Endothelial cell of umbilical vein (primary cell): ENCODE measurements at regions of chr20 and their contacts with region 1.

Region 1: DNA sequence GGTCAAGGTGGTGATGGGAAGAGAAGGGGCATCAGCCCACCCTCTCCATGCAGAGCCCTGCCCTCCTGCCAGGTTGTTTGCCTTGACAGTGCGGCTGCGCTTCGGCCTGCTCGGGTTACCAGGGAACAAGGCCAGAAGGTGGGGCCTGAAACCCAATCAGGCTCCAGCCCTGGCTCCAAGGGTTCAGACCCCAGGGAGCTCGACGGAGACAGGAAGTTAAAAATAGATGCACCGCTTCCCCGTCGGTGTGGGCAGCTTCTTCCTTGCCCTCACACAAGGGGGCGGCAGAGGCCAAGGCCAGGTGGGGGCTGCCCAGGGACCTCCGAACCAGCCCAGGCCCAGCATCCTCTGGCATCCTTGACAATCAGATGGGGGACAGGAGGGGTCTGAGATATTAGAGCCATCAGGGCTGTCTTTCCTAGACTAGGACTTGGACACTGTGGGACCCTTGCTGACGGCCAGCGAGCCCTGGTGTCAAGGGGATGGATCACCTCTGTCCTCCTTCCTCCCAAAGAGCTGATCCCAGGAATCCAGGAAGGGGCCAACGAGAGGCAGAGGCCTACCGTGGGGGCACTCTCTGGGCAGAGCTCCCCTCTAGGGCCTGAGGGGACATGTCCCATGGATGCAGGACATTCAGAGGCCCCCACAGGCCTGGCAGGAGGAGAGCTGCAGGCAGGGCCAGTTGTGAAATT is 65.2 kb downstream of the RIPOR3 start:
- DNase-seq: no peak
- H3K4me3 ChIP-seq: no peak overlapping the region
- H3K27ac ChIP-seq: no peak overlapping the region
- H3K4me1 ChIP-seq: no peaks in the 10 kb centered on the region
- H3K27me3 ChIP-seq: no peaks in the 10 kb centered on the region
- CTCF ChIP-seq: peak; percentile 29
- POLR2A ChIP-seq: no peak

Region 2: DNA sequence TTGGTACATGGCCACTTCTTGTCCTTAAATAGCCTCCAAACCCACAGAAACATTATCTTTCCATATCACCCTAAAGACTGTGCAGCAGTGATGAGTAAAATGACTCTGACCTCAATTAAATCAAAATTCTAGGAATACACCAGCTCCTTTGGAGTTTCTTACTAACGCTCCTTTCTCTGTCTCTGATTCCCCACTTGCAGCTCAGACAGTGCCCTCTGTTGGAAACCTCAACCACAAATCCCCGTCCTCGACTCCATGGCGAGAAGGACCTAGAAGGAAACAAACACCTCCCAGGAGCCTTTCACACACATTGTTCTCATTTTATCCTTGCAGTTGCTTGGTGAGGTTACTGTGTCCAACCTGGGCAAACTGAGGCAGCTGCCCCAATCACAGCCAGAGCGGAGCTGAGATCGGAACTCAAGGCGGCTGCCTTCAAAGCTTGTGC is 87.5 kb after region 1 on chr20:
- CTCF ChIA-PET with region 1: interaction called, 14 read pairs
- POLR2A ChIA-PET with region 1: no interaction called
- dilution Hi-C with region 1: no loop called
- intact Hi-C with region 1: no loop called
- DNase-seq: no peak
- H3K4me3 ChIP-seq: no peak overlapping the region
- H3K27ac ChIP-seq: no peak overlapping the region
- H3K4me1 ChIP-seq: no peaks in the 10 kb centered on the region
- H3K27me3 ChIP-seq: peaks cover 3 to 9% of the 10 kb centered on the region in 2 experiments
- CTCF ChIP-seq: peak; percentile 9 to 18
- POLR2A ChIP-seq: no peak

Region 3: DNA sequence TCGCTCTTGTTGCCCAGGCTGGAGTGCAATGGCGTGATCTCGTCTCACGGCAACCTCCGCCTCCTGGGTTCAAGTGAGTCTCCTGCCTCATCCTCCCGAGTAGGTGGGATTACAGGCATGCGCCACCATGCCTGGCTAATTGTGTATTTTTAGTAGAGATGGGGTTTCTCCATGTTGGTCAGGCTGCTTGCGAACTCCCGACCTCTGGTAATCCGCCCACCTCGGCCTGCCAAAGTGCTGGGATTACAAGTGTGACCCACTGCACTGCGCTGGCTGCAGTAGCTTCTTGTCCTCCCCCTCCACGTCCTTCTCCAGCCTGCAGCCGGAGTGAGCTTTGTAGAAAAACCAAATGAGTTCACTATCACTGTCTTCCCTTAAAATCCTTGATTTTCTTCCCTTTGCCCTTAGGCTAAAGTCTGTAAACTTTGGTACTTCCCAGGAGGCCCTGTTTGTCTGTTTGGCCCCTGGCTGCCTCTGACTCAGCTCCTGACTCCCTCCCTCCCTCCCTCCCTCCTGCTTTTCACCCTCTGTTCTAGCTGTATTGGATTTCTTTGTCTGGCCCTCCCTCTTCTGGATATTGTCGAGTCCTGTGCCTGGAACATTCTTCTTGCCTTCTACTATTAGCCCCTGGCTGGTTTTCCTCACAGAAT is 118.1 kb after region 1 on chr20:
- CTCF ChIA-PET with region 1: interaction called, 181 read pairs
- POLR2A ChIA-PET with region 1: no interaction called
- dilution Hi-C with region 1: no loop called
- intact Hi-C with region 1: loop called (anchors 2 kb)
- DNase-seq: peak; percentile 42
- H3K4me3 ChIP-seq: no peak overlapping the region
- H3K27ac ChIP-seq: no peak overlapping the region
- H3K4me1 ChIP-seq: peaks cover 9% of the 10 kb centered on the region
- H3K27me3 ChIP-seq: no peaks in the 10 kb centered on the region
- CTCF ChIP-seq: no peak
- POLR2A ChIP-seq: no peak